ENCODE measurements at regions of chr3 and their contacts with region 1.

Region 1: GRCh38 chr3:59957150-59957549 is 907.3 kb upstream of the CFAP20DC start:
- DNase-seq: no peak

Region 2: DNA sequence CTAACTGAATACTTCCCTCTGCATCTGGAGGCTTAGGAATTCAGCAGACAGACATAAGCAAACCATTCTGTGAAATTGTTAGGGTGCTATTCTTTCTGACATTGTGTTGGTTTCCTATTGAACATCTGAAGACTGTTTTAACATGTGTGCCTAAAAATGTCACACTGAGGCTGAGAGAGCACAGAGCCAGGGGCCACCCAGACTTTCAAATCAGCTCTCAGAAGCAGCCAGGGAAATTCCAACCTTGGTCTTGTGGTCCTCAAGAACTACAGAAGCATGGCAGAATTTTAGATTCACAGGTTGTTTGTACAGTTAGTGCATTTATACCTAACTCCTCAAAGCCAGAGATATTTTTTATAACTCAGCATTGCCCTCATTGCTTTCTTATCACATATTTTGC is 21.8 kb after region 1 on chr3:
- intact Hi-C with region 1: loop called in 1 of 2 experiments (anchors 1 kb)
- DNase-seq: no peak